Activated T-helper 1 cell treated with anti-CD3 and anti-CD28 coated beads, Interleukin-12 subunit alpha, Interleukin-12 subunit beta, Interleukin-2, Interleukin-4 antibody, amounts not matched to agents 30 ng/mL and 10 ng/mL and 1 ng/mL, durations not matched to agents 14 hours and 24 hours and 36 hours (primary cell): ENCODE measurements at regions of chr13 and their contacts with region 1.

Region 1: DNA sequence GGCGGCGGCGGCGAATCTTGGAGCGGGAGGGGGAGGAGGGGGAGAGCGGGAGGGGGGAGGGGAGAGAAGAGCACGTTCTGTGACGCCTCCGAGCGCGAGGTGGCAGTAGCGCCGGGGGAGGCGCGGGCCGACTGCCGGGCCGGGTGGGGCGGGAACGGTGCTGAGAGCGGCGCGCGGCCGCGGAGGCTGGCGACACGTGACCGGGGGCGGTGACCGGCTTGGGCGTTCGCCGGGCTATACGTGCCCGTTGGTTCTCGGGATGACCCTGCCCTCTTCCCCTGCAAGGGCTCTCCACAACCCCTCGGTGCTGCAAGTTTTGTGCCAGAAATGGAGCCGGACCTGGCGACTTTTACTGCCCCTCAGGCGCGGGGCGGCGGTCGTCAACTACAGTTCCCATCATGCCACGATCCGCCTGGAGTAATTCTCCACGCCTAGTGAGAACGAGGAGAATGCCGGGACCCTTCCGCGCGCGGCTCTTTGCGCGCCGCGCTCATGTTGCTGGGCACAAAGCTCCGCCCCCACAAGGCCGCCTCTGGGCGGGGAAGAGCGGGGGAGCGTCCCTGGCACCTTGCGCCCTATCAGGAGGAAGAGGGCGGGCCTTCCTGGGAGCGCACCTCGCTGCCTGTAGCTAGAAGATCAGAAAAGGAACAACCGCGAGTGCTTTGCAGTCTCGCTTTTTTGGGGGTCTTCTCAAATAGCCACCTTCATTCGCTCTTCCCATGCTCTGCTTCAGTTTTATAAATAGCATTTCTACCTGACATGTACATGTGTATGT is at the start of gene KPNA3:
- DNase-seq: peak; percentile 93
- H3K4me3 Mint-ChIP-seq: peak within 1 kb of the TSS; percentile 96
- H3K27ac Mint-ChIP-seq: peak within 1 kb of the TSS; percentile 97
- H3K4me1 Mint-ChIP-seq: peaks cover 30% of the 10 kb centered on the region
- H3K27me3 Mint-ChIP-seq: peaks cover 6% of the 10 kb centered on the region
- total RNA-seq, gene KPNA3: 54.7 and 55.0 TPM in 2 replicates

Region 2: DNA sequence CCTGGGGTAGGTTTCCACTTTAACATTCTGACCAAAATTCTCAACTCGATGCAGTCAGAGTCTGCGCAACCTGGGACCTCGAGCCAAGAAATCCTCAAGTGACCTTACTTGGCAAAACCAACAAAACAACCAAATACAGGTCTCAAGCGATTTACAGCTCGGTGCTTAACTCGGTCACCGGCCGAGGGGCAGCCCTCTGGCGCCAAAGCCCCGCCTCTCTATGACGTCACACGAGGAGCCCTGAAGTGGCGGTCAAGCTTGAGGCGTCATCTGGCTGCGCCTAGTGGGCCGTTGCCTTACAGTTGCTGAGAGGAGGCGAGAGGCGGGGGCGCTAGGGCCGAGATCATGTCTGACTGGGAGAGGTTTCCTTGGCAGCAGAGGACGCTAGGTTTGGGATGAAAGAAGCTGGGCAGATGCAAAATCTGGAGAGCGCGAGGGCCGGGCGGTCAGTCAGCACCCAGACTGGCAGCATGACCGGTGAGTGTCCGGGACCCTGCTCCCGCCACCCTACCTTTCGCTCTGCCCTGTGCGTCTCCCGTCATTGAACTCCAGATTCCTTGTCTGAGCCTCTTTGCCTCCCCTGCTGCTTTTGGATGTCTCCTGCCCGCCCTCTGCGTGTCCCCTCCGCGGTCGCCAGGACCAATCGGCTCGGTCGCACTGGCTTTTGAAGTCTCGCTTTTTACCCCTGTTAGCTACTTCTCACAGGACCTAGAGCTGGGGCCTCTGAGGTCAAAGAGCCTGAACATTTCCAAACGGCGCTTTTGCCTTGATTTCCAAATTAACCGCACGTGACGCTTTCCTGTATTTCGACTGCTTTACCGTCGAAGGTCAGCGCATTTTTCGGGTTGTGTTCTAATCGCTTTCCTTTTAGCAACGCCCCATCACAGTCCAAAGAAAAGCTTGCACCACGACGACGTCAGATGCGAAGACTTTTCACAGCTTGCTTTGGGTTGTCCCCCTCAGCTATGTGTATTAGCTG is 544.8 kb before region 1 on chr13 and contains the start of gene CDADC1:
- intact Hi-C with region 1: loop called (anchors 5 kb)
- DNase-seq: peak; percentile 90
- H3K4me3 Mint-ChIP-seq: peak within 1 kb of the TSS; percentile 97
- H3K27ac Mint-ChIP-seq: peak within 1 kb of the TSS; percentile 97
- H3K4me1 Mint-ChIP-seq: peaks cover 40% of the 10 kb centered on the region
- H3K27me3 Mint-ChIP-seq: peaks cover 14% of the 10 kb centered on the region
- total RNA-seq, gene CDADC1: 8.1 and 9.5 TPM in 2 replicates

Region 3: DNA sequence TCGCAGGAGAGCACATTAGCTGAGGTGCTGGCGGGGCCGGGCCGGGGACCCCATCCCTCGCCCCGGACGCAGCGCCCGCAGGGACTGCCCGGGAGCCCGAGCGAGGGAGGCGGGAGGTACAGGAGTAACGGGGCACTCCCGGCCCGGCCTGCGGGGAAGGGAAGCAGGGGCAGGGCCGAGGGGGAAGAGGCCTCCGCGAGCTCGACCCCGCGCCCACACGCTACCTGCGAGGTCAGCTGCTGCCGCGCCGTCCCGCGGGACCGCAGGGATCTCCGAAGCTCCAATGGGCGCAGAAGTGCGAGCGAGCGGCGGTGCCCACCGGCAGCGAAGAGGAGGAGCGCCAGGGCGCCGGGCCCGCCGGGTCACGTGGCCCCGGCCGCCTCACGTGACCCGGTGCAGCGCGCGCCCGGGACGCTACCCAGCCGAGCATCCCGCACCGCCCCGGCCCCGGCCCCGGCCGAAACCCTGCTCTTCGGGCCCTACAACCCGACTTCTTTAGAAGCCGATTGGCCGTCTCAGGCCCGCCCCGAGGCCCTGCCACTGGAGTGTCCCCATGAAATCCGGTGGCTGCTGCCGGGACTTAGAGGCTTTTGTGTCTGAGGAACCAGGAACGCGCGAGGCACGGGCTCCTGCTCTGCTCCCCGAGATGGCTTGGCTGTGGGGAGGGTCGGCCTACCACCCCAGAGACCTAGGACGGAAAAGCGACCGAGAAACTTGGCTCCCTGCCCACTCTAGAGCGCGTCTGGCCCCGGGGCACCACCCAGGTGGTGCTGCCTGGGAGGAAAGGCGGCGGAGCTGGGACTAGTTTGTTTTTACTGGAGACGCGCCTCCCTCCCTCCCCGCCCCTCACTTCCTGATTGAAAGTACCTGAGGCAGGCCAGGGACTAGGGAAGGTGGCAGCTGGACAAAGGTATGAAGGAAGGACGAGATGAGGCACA is 207.2 kb before region 1 on chr13 and contains the start of gene RCBTB1:
- intact Hi-C with region 1: loop called (anchors 2 kb)
- DNase-seq: peak; percentile 60
- H3K4me3 Mint-ChIP-seq: peak within 1 kb of the TSS; percentile 90
- H3K27ac Mint-ChIP-seq: peak within 1 kb of the TSS; percentile 93
- H3K4me1 Mint-ChIP-seq: peaks cover 20% of the 10 kb centered on the region
- H3K27me3 Mint-ChIP-seq: peaks cover 2% of the 10 kb centered on the region
- total RNA-seq, gene RCBTB1: 14.9 and 16.3 TPM in 2 replicates

Region 4: GRCh38 chr13:49679246-49679645 is 113.5 kb before region 1 on chr13:
- intact Hi-C with region 1: loop called (anchors 2 kb)
- DNase-seq: no peak
- H3K4me3 Mint-ChIP-seq: no peak overlapping the region
- H3K27ac Mint-ChIP-seq: no peak overlapping the region
- H3K4me1 Mint-ChIP-seq: peaks cover 20% of the 10 kb centered on the region
- H3K27me3 Mint-ChIP-seq: no peaks in the 10 kb centered on the region

Region 5: GRCh38 chr13:49936085-49936940 is 143.6 kb after region 1 on chr13 and contains the start of gene SPRYD7:
- intact Hi-C with region 1: loop called (anchors 1 kb)
- DNase-seq: peak; percentile 92
- H3K4me3 Mint-ChIP-seq: peak within 1 kb of the TSS; percentile 94
- H3K27ac Mint-ChIP-seq: peak within 1 kb of the TSS; percentile 87
- H3K4me1 Mint-ChIP-seq: peaks cover 11% of the 10 kb centered on the region
- H3K27me3 Mint-ChIP-seq: peaks cover 22% of the 10 kb centered on the region
- total RNA-seq, gene SPRYD7: 6.9 and 7.0 TPM in 2 replicates

Region 6: GRCh38 chr13:50236898-50237318 is 444.2 kb after region 1 on chr13:
- intact Hi-C with region 1: loop called (anchors 10 kb)
- DNase-seq: peak; percentile 45
- H3K4me3 Mint-ChIP-seq: peak overlapping the region; percentile 27
- H3K27ac Mint-ChIP-seq: peak overlapping the region; percentile 78
- H3K4me1 Mint-ChIP-seq: peaks cover 59% of the 10 kb centered on the region
- H3K27me3 Mint-ChIP-seq: peaks cover 22% of the 10 kb centered on the region